ENCODE measurements at regions of chr2 and their contacts with region 1.

Region 1: GRCh38 chr2:222318026-222318711 is 19.4 kb upstream of the PAX3 start:
- DNase-seq: no peak
- H3K4me3 ChIP-seq: no peak overlapping the region
- CTCF ChIP-seq: no peak
- POLR2A ChIP-seq: no peak

Region 2: GRCh38 chr2:222504719-222505118 is 186.6 kb after region 1 on chr2:
- intact Hi-C with region 1: no loop called
- DNase-seq: no peak
- H3K4me3 ChIP-seq: no peak overlapping the region
- CTCF ChIP-seq: no peak
- POLR2A ChIP-seq: no peak

Region 3: DNA sequence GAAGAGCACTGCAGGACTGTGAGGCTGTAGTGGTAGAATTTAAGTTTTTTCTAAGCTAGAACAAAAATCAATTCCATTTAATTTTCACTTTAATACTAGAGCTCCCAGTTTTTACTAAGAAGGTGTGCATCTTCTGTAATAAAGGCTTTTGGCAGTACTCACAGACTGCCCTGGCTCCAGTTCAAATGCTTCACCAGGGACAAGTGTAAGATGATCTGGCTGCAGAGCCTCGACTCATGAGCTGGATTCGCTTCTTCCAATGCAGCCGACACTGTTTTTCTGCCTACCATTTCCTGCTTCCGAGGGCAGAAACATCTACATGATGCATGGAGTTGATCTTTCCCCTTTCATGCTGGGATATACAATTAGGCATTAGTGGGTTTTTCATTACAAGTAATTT is 250.7 kb after region 1 on chr2:
- intact Hi-C with region 1: loop called (anchors 5 kb)
- DNase-seq: no peak
- H3K4me3 ChIP-seq: no peak overlapping the region
- CTCF ChIP-seq: no peak
- POLR2A ChIP-seq: no peak

Measured in lower leg skin (tissue), 4 donors.